ENCODE measurements at regions of chr22 and their contacts with region 1.

Region 1: GRCh38 chr22:43826142-43827002 is 14.3 kb upstream of the EFCAB6 start:
- DNase-seq: peak in 1 of 2 donors; percentile 64
- ATAC-seq: no peak
- H3K4me3 ChIP-seq: no peak overlapping the region
- H3K27ac ChIP-seq: no peak overlapping the region
- H3K4me1 ChIP-seq: no peaks in the 10 kb centered on the region
- H3K27me3 ChIP-seq: no peaks in the 10 kb centered on the region

Region 2: GRCh38 chr22:43399338-43399979 is 426.9 kb before region 1 on chr22:
- intact Hi-C with region 1: loop called in 1 of 2 experiments (anchors 10 kb)
- DNase-seq: peak; percentile 42 to 49
- ATAC-seq: no peak
- H3K4me3 ChIP-seq: no peak overlapping the region
- H3K27ac ChIP-seq: no peak overlapping the region
- H3K4me1 ChIP-seq: no peaks in the 10 kb centered on the region
- H3K27me3 ChIP-seq: no peaks in the 10 kb centered on the region

Measured in aorta (tissue), 5 donors.